SK-N-SH (cell line): ENCODE measurements at regions of chrX and their contacts with region 1.

Region 1: DNA sequence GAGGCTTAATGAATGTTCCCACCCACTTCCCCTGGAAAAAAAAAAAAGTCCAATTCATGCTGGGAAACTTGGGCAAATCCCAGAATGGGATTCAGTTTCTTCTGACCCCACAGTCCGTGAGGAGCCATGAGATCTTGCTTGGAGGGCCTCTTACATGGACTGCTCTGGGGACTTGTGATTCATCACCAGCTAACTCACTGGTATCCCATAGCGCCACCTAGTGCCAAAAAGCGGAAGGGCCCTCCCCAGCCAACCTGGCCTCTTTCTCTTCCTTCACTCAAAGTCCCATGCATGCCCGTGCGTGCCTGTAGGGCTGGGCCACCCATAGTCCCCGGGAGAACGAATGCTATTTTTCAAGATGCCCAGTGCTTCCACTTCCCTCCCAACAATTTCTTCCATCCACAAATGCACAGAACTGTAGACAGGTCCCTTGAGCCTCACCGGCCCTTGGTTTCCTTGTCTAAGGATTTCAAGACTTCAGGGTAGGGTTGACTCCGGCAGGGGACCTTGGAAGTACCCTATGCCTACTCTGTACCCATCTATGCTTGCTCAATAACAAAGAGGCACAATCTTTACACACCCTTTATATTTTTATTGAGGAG is 5.1 kb downstream of the RTL5 start:
- DNase-seq: peak; percentile 82
- H3K4me3 ChIP-seq: no peak overlapping the region; a peak in 1 of 4 replicates
- H3K27ac ChIP-seq: peak overlapping the region in 1 of 2 experiments; percentile 93; a peak in 2 of 4 replicates
- H3K4me1 ChIP-seq: peaks cover 14 to 80% of the 10 kb centered on the region in 2 experiments; a peak in 3 of 4 replicates
- H3K27me3 ChIP-seq: peaks cover 5% of the 10 kb centered on the region; the same call in 1 of the 2 replicates
- CTCF ChIP-seq: peak; percentile 95
- EP300 ChIP-seq: no peak
- RAD21 ChIP-seq: peak; percentile 95

Region 2: DNA sequence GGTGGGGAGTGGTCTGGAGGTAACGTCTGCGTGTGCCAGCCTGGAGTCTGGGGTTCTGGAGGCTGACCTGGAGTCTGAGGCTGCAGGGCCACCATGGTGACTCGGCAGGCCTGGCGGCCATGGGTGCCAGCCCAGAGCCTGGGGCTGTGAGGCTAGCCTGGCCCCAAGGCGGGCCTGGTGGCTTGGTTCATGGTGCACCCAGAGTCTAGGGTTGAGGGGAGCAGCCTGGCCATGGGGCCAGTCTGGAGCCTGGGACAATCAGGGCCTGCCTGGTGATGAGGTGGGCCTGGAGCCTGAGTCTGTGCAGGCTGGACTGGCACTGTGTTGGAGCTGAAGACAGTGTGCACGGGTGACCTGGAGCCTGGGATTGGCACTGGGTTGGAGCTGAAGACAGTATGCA is 298.6 kb before region 1 on chrX:
- CTCF ChIA-PET with region 1: no interaction called
- POLR2A ChIA-PET with region 1: no interaction called
- DNase-seq: no peak
- H3K4me3 ChIP-seq: no peak overlapping the region
- H3K27ac ChIP-seq: no peak overlapping the region
- H3K4me1 ChIP-seq: no peaks in the 10 kb centered on the region
- H3K27me3 ChIP-seq: peaks cover 17% of the 10 kb centered on the region; the same call in 1 of the 2 replicates
- CTCF ChIP-seq: no peak
- EP300 ChIP-seq: no peak
- RAD21 ChIP-seq: no peak

Region 3: DNA sequence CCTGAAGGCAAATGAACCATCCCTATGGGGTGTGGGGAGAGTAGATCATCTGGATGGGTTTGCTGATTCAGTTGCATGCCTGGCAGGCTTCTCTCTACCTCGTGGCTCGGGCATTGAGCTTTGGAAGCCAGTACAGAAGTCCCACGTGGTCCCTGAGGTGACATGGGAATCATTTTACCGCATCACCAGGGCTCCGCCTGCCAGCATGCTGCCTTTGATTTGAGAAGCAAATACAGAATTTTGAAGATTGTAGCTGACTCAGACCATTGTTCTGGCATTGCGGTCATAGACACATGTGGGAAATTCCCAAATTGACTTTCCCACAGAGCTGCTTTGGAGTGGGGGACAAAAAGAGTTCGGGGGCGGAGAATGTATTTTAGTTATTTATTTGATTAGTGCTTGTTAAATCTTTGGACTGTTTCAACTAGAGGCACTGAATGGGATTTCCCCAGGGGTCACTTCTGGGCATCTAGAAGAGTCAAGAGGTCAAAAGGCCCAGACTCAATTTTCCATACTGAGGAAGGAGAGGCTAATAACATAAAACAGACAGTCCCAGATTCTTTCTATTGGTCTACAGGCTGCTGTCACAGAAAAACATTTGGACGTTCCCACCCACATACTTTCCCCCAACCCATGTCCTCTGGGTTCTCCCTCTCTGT is 136.7 kb before region 1 on chrX:
- CTCF ChIA-PET with region 1: interaction called, 11 read pairs
- POLR2A ChIA-PET with region 1: no interaction called
- DNase-seq: no peak
- H3K4me3 ChIP-seq: no peak overlapping the region
- H3K27ac ChIP-seq: no peak overlapping the region
- H3K4me1 ChIP-seq: no peaks in the 10 kb centered on the region
- H3K27me3 ChIP-seq: peaks cover 11% of the 10 kb centered on the region; the same call in 1 of the 2 replicates
- CTCF ChIP-seq: no peak
- EP300 ChIP-seq: no peak
- RAD21 ChIP-seq: no peak

Region 4: DNA sequence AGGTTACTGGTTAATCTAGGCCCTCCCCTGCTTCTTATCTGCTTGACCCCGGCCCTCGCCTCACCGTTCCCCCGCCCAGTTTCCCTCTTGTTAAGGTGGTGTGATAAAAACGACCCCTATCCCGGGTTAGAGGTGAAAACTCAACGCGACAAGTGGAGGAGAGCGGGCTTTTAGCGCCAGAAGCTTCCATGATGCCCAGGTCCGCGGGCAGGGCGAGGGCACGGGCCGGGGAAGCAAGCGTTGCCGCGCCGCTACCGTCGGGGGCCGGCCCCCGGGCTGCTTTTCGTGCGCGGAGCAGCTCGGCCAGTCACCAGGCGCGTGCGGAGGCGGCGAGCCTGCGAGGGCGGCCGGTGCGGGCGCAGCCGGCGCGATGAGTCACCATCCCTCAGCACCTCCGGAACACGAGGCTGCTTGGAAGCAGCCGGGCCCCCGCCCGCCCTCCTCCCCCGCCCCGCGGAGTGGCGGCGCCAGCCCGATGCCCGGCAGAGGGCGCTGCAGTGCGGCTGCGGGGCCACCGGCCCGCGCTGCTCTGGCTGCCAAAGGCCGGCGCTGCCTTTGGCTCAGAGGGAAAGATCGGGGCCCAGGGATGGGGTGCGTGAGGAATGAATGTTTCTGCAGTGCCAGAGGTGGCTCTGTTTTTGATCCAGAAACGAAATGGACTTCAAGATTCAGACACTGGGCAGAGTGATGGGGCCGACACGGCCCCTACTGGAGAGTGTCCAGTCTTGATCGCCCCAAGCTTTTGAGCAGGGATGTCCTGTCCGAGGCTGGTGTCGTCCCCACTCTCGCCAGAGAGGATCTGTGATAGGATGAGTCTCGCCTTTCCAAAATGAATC is 108.1 kb before region 1 on chrX:
- CTCF ChIA-PET with region 1: interaction called, 257 read pairs
- POLR2A ChIA-PET with region 1: interaction called, 6 read pairs
- DNase-seq: peak; percentile 97
- H3K4me3 ChIP-seq: no peak overlapping the region
- H3K27ac ChIP-seq: no peak overlapping the region
- H3K4me1 ChIP-seq: peaks cover 3 to 7% of the 10 kb centered on the region in 2 experiments; a peak in 1 of 4 replicates
- H3K27me3 ChIP-seq: peaks cover 19% of the 10 kb centered on the region; the same call in 1 of the 2 replicates
- CTCF ChIP-seq: peak; percentile 70
- EP300 ChIP-seq: peak in 1 of 2 experiments; percentile 15; a peak in 1 of 4 replicates
- RAD21 ChIP-seq: peak; percentile 72

Region 5: GRCh38 chrX:72069350-72070160 is 57.1 kb before region 1 on chrX:
- CTCF ChIA-PET with region 1: interaction called, 46 read pairs
- POLR2A ChIA-PET with region 1: interaction called, 5 read pairs
- DNase-seq: no peak
- H3K4me3 ChIP-seq: peak overlapping the region in 1 of 2 experiments; percentile 40; a peak in 2 of 4 replicates
- H3K27ac ChIP-seq: peak overlapping the region in 1 of 2 experiments; percentile 45; a peak in 2 of 4 replicates
- H3K4me1 ChIP-seq: peaks cover 0 to 30% of the 10 kb centered on the region in 2 experiments; a peak in 1 of 4 replicates
- H3K27me3 ChIP-seq: peaks cover 67% of the 10 kb centered on the region
- CTCF ChIP-seq: no peak
- EP300 ChIP-seq: no peak
- RAD21 ChIP-seq: no peak

Region 6: GRCh38 chrX:72115380-72115779 is 11.3 kb before region 1 on chrX:
- CTCF ChIA-PET with region 1: interaction called, 31 read pairs
- POLR2A ChIA-PET with region 1: interaction called, 10 read pairs
- DNase-seq: peak; percentile 83
- H3K4me3 ChIP-seq: no peak overlapping the region
- H3K27ac ChIP-seq: peak overlapping the region in 1 of 2 experiments; percentile 95; a peak in 2 of 4 replicates
- H3K4me1 ChIP-seq: peaks cover 0 to 40% of the 10 kb centered on the region in 2 experiments; a peak in 2 of 4 replicates
- H3K27me3 ChIP-seq: no peaks in the 10 kb centered on the region; the same call in 1 of the 2 replicates
- CTCF ChIP-seq: no peak
- EP300 ChIP-seq: peak in 1 of 2 experiments; percentile 99; a peak in 2 of 4 replicates
- RAD21 ChIP-seq: peak; percentile 35; the same call in 1 of the 2 replicates

Region 7: DNA sequence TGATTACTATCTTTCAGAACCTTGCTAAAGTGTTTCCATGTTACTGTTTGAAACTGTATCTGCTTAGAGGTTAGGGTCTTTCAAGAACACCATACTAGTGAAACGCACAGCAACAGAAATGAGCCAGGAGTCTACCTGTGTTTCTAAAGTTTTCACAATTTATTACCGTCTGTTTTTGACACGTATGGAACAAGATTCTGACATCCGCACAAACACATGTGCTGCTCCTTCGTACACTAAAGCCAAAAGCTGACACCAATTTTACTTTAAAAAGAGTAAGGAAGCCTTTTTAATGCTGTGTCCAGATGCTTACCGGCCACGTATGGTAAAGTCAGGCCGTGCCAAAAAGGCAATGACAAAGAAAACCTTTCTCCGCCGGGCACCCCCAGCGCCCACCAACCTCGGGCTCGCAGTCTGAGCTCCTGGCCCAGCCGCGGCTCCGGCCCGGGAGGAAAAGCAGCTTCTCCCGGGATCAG is 149.9 kb after region 1 on chrX:
- CTCF ChIA-PET with region 1: interaction called, 3 read pairs
- POLR2A ChIA-PET with region 1: interaction called, 11 read pairs
- DNase-seq: no peak
- H3K4me3 ChIP-seq: peak overlapping the region; percentile 87 to 97
- H3K27ac ChIP-seq: peak overlapping the region; percentile 75 to 94
- H3K4me1 ChIP-seq: peaks cover 30 to 33% of the 10 kb centered on the region in 2 experiments; a peak in 3 of 4 replicates
- H3K27me3 ChIP-seq: no peaks in the 10 kb centered on the region
- CTCF ChIP-seq: no peak
- EP300 ChIP-seq: no peak
- RAD21 ChIP-seq: no peak

Region 8: DNA sequence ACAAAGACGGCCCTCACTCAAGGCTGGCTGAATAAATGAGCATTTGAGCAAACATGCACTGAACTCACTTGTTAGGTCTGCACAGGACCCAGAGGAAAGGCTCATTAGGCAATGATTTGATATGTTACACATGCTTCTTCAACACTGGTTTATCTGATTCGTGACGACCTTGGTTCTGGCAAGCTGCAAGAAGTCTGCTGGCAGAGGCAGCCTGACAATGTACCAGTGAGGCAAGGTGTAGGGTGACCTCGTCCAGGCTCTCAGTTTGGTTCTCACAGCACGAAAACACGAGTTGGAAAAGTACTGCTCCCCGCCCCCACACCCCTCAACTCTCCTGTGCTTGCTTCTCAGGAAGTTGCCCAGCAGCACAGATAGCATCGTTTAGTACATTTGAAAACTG is 242.2 kb after region 1 on chrX:
- CTCF ChIA-PET with region 1: no interaction called
- POLR2A ChIA-PET with region 1: no interaction called
- DNase-seq: no peak
- H3K4me3 ChIP-seq: no peak overlapping the region
- H3K27ac ChIP-seq: no peak overlapping the region
- H3K4me1 ChIP-seq: peaks cover 0 to 5% of the 10 kb centered on the region in 2 experiments; a peak in 1 of 4 replicates
- H3K27me3 ChIP-seq: no peaks in the 10 kb centered on the region
- CTCF ChIP-seq: no peak
- EP300 ChIP-seq: no peak
- RAD21 ChIP-seq: no peak